ENCODE measurements at regions of chr12 and their contacts with region 1.

Region 1: GRCh38 chr12:31267966-31268365 is 58.0 kb downstream of the SINHCAF start:
- DNase-seq: no peak
- ATAC-seq: no peak
- H3K4me3 ChIP-seq: no peak overlapping the region
- H3K27ac ChIP-seq: no peak overlapping the region
- H3K4me1 ChIP-seq: no peaks in the 10 kb centered on the region
- H3K27me3 ChIP-seq: no peaks in the 10 kb centered on the region
- CTCF ChIP-seq: no peak
- EP300 ChIP-seq: no peak
- POLR2A ChIP-seq: no peak
- RAD21 ChIP-seq: no peak

Region 2: GRCh38 chr12:31238764-31239387 is 29.1 kb before region 1 on chr12:
- CTCF ChIA-PET with region 1: interaction called, 18 read pairs
- POLR2A ChIA-PET with region 1: no interaction called
- RAD21 ChIA-PET with region 1: interaction called, 5 read pairs
- SMC1A ChIA-PET with region 1: interaction called, 15 read pairs
- in situ Hi-C with region 1: no loop called
- intact Hi-C with region 1: no loop called
- DNase-seq: peak; percentile 23
- ATAC-seq: peak; percentile 85
- H3K4me3 ChIP-seq: no peak overlapping the region
- H3K27ac ChIP-seq: no peak overlapping the region
- H3K4me1 ChIP-seq: peaks cover 12% of the 10 kb centered on the region
- H3K27me3 ChIP-seq: no peaks in the 10 kb centered on the region; a peak in 1 of 4 replicates
- CTCF ChIP-seq: peak; percentile 76 to 81 (median 77)
- EP300 ChIP-seq: no peak
- POLR2A ChIP-seq: no peak
- RAD21 ChIP-seq: peak; percentile 82

Region 3: DNA sequence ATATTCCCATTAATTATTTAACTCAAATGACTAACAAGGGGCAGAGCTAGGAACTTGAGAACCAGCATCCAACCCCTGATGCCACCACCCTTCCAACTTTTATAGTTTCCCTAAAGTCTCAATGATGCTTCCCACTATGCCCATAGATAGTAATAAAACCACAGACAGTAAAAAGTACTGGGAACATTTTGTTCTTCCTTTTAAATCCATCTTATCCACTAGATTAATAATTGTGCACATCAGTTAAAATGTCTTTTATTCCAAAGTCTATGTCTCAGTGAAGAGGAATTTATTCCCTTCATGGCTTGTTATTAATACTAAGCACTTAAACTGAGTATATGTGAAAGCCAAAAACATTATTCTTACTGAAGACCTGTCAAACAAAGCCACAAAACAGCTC is 12.2 kb after region 1 on chr12:
- CTCF ChIA-PET with region 1: interaction called, 16 read pairs
- POLR2A ChIA-PET with region 1: no interaction called
- RAD21 ChIA-PET with region 1: no interaction called
- SMC1A ChIA-PET with region 1: interaction called, 4 read pairs
- in situ Hi-C with region 1: no loop called
- intact Hi-C with region 1: no loop called
- DNase-seq: no peak
- ATAC-seq: no peak
- H3K4me3 ChIP-seq: no peak overlapping the region
- H3K27ac ChIP-seq: no peak overlapping the region
- H3K4me1 ChIP-seq: no peaks in the 10 kb centered on the region
- H3K27me3 ChIP-seq: no peaks in the 10 kb centered on the region
- CTCF ChIP-seq: no peak
- EP300 ChIP-seq: no peak
- POLR2A ChIP-seq: no peak
- RAD21 ChIP-seq: no peak

Region 4: GRCh38 chr12:31297572-31298512 is 29.9 kb after region 1 on chr12:
- CTCF ChIA-PET with region 1: interaction called, 30 read pairs
- POLR2A ChIA-PET with region 1: no interaction called
- RAD21 ChIA-PET with region 1: interaction called, 11 read pairs
- SMC1A ChIA-PET with region 1: interaction called, 9 read pairs
- in situ Hi-C with region 1: no loop called
- intact Hi-C with region 1: no loop called
- DNase-seq: peak; percentile 45
- ATAC-seq: peak; percentile 53
- H3K4me3 ChIP-seq: peak overlapping the region; percentile 46; the same call in 1 of the 2 replicates
- H3K27ac ChIP-seq: peak overlapping the region; percentile 91
- H3K4me1 ChIP-seq: peaks cover 32% of the 10 kb centered on the region
- H3K27me3 ChIP-seq: no peaks in the 10 kb centered on the region
- CTCF ChIP-seq: no peak
- EP300 ChIP-seq: no peak
- POLR2A ChIP-seq: no peak
- RAD21 ChIP-seq: no peak

Region 5: DNA sequence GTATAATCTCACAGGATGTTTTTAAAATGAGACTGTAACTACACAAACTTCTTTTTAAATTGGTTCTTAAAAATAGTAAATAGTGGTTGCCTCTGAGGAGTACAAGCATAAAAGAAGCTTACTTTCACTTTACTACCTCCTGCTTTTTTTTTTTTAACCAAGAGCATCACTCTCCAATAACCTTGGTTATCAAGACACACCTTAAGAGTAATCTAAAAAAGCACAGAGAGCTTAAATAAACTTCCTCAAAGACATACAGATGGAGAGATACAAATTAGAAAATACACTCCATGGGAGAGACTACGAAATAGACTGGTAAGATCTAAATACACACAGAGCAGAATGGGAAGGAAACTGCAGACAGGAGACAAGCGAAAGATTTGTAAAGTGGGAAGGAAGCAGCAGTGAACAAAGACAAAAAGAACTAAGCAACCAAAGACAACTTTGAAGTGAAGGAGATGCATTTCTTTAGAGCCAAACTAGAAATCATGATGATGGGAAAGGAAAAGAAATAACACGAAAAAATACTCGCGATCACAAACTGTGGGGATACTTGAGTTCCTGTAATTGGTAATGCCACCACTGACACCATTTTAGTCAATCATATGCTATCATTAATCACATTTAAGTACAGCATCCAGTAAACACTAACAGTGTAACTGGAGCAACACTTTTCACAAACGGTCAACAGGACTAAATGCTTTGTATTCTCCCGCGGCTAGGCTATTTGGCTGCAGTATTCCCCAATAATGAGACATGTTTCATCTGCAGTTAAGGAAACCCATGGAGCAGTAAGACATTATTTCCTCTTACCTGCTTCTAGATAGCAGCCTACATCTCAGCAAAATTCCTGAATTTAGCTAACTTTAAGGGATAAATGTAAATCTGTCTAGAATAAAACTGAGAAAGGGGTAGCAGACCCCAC is 49.8 kb after region 1 on chr12:
- CTCF ChIA-PET with region 1: interaction called, 26 read pairs
- POLR2A ChIA-PET with region 1: interaction called, 3 read pairs
- RAD21 ChIA-PET with region 1: interaction called, 6 read pairs
- SMC1A ChIA-PET with region 1: interaction called, 21 read pairs
- in situ Hi-C with region 1: no loop called
- intact Hi-C with region 1: no loop called
- DNase-seq: no peak
- ATAC-seq: peak; percentile 44
- H3K4me3 ChIP-seq: peak overlapping the region; percentile 92
- H3K27ac ChIP-seq: peak overlapping the region; percentile 95
- H3K4me1 ChIP-seq: peaks cover 18% of the 10 kb centered on the region; the same call in 1 of the 2 replicates
- H3K27me3 ChIP-seq: no peaks in the 10 kb centered on the region
- CTCF ChIP-seq: no peak
- EP300 ChIP-seq: no peak
- POLR2A ChIP-seq: no peak
- RAD21 ChIP-seq: no peak

Region 6: GRCh38 chr12:31362759-31363415 is 94.9 kb after region 1 on chr12:
- CTCF ChIA-PET with region 1: interaction called, 33 read pairs
- POLR2A ChIA-PET with region 1: no interaction called
- RAD21 ChIA-PET with region 1: interaction called, 21 read pairs
- SMC1A ChIA-PET with region 1: interaction called, 17 read pairs
- in situ Hi-C with region 1: no loop called
- intact Hi-C with region 1: no loop called
- DNase-seq: peak; percentile 46
- ATAC-seq: peak; percentile 82
- H3K4me3 ChIP-seq: no peak overlapping the region
- H3K27ac ChIP-seq: peak overlapping the region; percentile 45
- H3K4me1 ChIP-seq: peaks cover 22% of the 10 kb centered on the region
- H3K27me3 ChIP-seq: no peaks in the 10 kb centered on the region
- CTCF ChIP-seq: peak; percentile 24 to 63 (median 27); a peak in 4 of 6 replicates
- EP300 ChIP-seq: 0 out of 4 replicates have a peak, but pooled peaks of 1 of the 2 experiments have one; percentile 11
- POLR2A ChIP-seq: peak; percentile 60; the same call in 1 of the 2 replicates
- RAD21 ChIP-seq: peak; percentile 49

Region 7: DNA sequence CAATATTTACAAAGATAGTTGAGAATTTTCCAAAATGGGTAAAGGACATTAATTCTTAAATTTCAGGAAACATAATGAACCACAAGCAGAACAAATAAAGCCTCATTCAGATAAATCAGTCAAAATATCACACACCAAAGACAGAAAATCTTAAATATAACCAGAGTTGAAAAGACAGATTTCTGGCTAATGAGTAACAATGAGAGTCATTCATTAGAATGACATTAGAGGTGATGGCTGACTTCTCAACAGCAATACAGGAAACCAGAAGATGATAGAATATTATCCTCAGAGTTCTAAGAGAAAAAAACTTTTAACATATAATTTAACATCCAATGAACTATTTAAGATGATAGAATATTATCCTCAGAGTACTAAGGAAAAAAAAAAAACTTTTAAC is 198.8 kb after region 1 on chr12:
- CTCF ChIA-PET with region 1: no interaction called
- POLR2A ChIA-PET with region 1: no interaction called
- RAD21 ChIA-PET with region 1: no interaction called
- SMC1A ChIA-PET with region 1: no interaction called
- in situ Hi-C with region 1: no loop called
- intact Hi-C with region 1: no loop called
- DNase-seq: no peak
- ATAC-seq: no peak
- H3K4me3 ChIP-seq: no peak overlapping the region
- H3K27ac ChIP-seq: no peak overlapping the region
- H3K4me1 ChIP-seq: no peaks in the 10 kb centered on the region; the same call in 1 of the 2 replicates
- H3K27me3 ChIP-seq: no peaks in the 10 kb centered on the region
- CTCF ChIP-seq: no peak
- EP300 ChIP-seq: no peak
- POLR2A ChIP-seq: no peak
- RAD21 ChIP-seq: no peak